Mammary epithelial cell (primary cell): ENCODE measurements at regions of chr2 and their contacts with region 1.

Region 1: GRCh38 chr2:40680547-40680946 is 228.7 kb upstream of the SLC8A1 start:
- DNase-seq: no peak
- H3K4me3 ChIP-seq: no peak overlapping the region
- H3K27ac ChIP-seq: no peak overlapping the region
- H3K4me1 ChIP-seq: no peaks in the 10 kb centered on the region
- H3K27me3 ChIP-seq: no peaks in the 10 kb centered on the region
- CTCF ChIP-seq: no peak

Region 2: DNA sequence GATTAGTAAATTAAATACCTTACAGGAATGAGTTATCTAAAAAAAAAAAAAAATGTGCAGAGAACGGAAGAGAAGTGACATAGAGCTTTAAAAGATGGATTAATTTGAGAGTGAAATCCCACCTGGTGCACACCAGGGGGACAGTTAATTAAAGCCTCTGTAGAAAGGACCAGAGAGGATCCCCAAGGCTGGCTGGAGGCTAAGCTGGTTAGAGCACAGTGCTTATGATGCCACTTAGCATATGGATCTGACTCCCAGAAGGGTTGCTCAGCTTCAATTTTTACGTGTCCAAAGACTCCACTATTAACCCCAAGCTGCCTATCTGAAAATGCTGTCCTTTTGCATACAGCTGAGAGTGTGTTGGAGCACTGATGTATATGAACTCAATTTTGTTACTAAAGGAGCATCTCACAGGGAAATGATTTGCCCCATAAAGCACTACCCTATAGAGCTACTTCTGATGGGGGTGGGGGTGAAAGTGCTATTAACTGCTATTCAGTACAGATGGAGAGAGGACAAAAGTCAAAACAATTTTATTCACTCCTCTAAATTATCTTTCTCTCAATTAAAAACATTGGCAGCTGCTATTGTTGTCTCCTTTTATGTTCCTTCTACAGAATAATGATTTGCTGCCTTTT is 213.5 kb before region 1 on chr2:
- CTCF ChIA-PET with region 1: no interaction called
- dilution Hi-C with region 1: no loop called
- in situ Hi-C with region 1: no loop called
- intact Hi-C with region 1: no loop called
- DNase-seq: no peak
- H3K4me3 ChIP-seq: no peak overlapping the region
- H3K27ac ChIP-seq: no peak overlapping the region
- H3K4me1 ChIP-seq: no peaks in the 10 kb centered on the region
- H3K27me3 ChIP-seq: no peaks in the 10 kb centered on the region
- CTCF ChIP-seq: no peak

Region 3: DNA sequence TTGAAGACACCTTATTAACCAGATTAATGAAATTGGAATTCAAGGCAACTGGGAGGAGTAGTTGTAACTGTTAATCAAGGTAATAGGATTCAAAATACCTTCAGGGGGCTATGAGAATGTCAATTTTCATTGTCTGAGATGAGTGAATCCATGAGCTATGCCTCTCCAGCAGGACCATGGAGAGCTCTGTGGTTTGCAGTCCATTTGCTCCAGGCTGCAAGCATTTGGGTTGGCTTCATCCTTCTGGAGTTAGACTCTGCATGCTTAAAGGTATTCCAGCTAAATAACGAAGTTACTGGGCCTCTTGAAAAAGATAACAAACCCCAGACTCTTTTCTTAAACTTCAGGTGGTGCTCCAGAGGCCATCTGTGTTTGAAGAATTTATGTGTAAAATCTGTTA is 21.6 kb before region 1 on chr2:
- CTCF ChIA-PET with region 1: no interaction called
- dilution Hi-C with region 1: no loop called
- in situ Hi-C with region 1: no loop called
- intact Hi-C with region 1: loop called (anchors 1 kb)
- DNase-seq: peak; percentile 7
- H3K4me3 ChIP-seq: no peak overlapping the region
- H3K27ac ChIP-seq: no peak overlapping the region
- H3K4me1 ChIP-seq: no peaks in the 10 kb centered on the region
- H3K27me3 ChIP-seq: no peaks in the 10 kb centered on the region
- CTCF ChIP-seq: no peak

Region 4: GRCh38 chr2:40668425-40668824 is 12.1 kb before region 1 on chr2:
- CTCF ChIA-PET with region 1: no interaction called
- dilution Hi-C with region 1: no loop called
- in situ Hi-C with region 1: no loop called
- intact Hi-C with region 1: loop called (anchors 2 kb)
- DNase-seq: no peak
- H3K4me3 ChIP-seq: no peak overlapping the region
- H3K27ac ChIP-seq: no peak overlapping the region
- H3K4me1 ChIP-seq: no peaks in the 10 kb centered on the region
- H3K27me3 ChIP-seq: no peaks in the 10 kb centered on the region
- CTCF ChIP-seq: no peak